ENCODE measurements at regions of chr11 and their contacts with region 1.

Region 1: DNA sequence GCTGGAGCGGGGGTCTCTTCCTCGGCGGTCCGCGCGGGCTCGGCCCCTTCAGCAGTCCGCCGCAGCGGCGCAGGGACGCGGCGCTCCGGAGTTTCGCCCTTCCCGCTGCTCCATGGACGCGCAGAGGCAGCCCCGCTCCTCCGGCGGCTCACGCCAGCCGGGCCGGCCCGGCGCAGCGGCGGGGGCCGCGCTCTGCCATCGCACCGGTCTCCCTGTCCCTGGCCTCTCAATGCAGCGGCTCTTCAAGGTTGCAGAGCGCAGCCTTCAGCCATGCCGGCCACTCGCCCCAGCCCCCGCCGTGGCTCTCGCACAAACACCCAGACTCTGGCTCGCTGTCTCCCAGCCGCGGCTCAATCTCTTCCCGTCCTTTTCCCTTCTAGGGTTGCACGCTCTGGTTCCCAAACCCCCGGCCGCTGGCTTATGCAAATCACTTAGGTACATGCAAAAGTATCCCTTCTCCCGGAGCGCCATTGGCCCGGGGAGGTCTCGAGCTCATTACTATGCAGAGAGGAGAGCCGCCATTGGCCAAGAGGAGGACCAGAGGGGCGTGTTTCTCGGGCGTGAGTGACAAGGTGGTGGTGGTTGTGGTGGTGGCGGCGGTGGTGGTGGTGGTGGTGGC is at the start of gene LGR4:
- DNase-seq: peak; percentile 97
- H3K4me3 ChIP-seq: peak within 1 kb of the TSS; percentile 85 to 96 (median 96)
- H3K27ac ChIP-seq: peak within 1 kb of the TSS; percentile 91 to 94 (median 92)
- H3K4me1 ChIP-seq: peaks cover 24 to 48% (median 44%) of the 10 kb centered on the region in 4 donors
- H3K27me3 ChIP-seq: no peaks in the 10 kb centered on the region
- CTCF ChIP-seq: no peak
- EP300 ChIP-seq: no peak
- POLR2A ChIP-seq: peak; percentile 12
- total RNA-seq, gene LGR4: 24.9 to 37.6 (median 27.6) TPM

Region 2: GRCh38 chr11:27362749-27363575 is 109.5 kb before region 1 on chr11 and contains the start of gene CCDC34:
- intact Hi-C with region 1: loop called (anchors 2 kb)
- DNase-seq: peak; percentile 95
- H3K4me3 ChIP-seq: peak within 1 kb of the TSS; percentile 68 to 74 (median 72)
- H3K27ac ChIP-seq: peak within 1 kb of the TSS in 3 of 4 donors; percentile 30 to 42 (median 42)
- H3K4me1 ChIP-seq: peaks cover 6 to 18% (median 15%) of the 10 kb centered on the region in 4 donors
- H3K27me3 ChIP-seq: no peaks in the 10 kb centered on the region
- CTCF ChIP-seq: no peak
- EP300 ChIP-seq: no peak
- POLR2A ChIP-seq: no peak
- total RNA-seq, gene CCDC34: 0.83 to 1.5 (median 1.2) TPM

Region 3: DNA sequence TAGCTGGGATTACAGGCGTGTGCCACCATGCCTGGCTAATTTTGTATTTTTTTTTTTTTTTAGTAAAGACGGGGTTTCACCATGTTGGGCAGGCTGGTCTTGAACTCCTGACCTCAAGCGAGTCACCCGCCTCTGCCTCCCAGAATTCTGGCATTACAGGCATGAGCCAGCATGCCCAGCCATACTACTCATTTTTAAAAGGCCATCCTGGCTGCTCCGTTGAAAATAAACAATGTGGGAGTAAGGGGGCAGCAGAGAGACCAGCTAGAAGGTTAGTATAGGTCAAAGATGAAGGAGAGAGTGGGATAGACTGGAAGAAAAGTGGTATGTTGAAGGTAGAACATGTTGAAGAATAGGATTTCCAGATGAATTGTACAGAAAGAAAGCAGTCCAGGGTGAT is 51.6 kb after region 1 on chr11:
- intact Hi-C with region 1: no loop called
- DNase-seq: no peak
- H3K4me3 ChIP-seq: no peak overlapping the region
- H3K27ac ChIP-seq: no peak overlapping the region
- H3K4me1 ChIP-seq: no peaks in the 10 kb centered on the region
- H3K27me3 ChIP-seq: no peaks in the 10 kb centered on the region
- CTCF ChIP-seq: no peak
- EP300 ChIP-seq: no peak
- POLR2A ChIP-seq: no peak

Region 4: GRCh38 chr11:27754035-27755017 is 281.8 kb after region 1 on chr11:
- intact Hi-C with region 1: no loop called
- DNase-seq: no peak
- H3K4me3 ChIP-seq: no peak overlapping the region
- H3K27ac ChIP-seq: no peak overlapping the region
- H3K4me1 ChIP-seq: no peaks in the 10 kb centered on the region
- H3K27me3 ChIP-seq: no peaks in the 10 kb centered on the region
- CTCF ChIP-seq: no peak
- EP300 ChIP-seq: no peak
- POLR2A ChIP-seq: no peak

Measured in esophagus muscularis mucosa (tissue), 4 donors.